Natural killer cell (primary cell): ENCODE measurements at regions of chr5 and their contacts with region 1.

Region 1: GRCh38 chr5:134101686-134102439 is 12.6 kb upstream of the TCF7 start:
- DNase-seq: peak; percentile 81 to 84
- ATAC-seq: peak; percentile 55 to 71 (median 60)
- H3K4me3 ChIP-seq: no peak overlapping the region
- H3K4me3 Mint-ChIP-seq: no peak overlapping the region
- H3K27ac ChIP-seq: no peak overlapping the region
- H3K27ac Mint-ChIP-seq: peak overlapping the region; percentile 82 to 87
- H3K4me1 ChIP-seq: peaks cover 81% of the 10 kb centered on the region
- H3K4me1 Mint-ChIP-seq: peaks cover 19 to 42% of the 10 kb centered on the region in 2 donors
- H3K27me3 ChIP-seq: no peaks in the 10 kb centered on the region
- H3K27me3 Mint-ChIP-seq: no peaks in the 10 kb centered on the region
- CTCF ChIP-seq: peak; percentile 92

Region 2: GRCh38 chr5:134041570-134042411 is 60.1 kb before region 1 on chr5:
- intact Hi-C with region 1: loop called (anchors 5 kb)
- DNase-seq: peak in 1 of 2 donors; percentile 33
- ATAC-seq: no peak
- H3K4me3 ChIP-seq: no peak overlapping the region
- H3K4me3 Mint-ChIP-seq: no peak overlapping the region
- H3K27ac ChIP-seq: peak overlapping the region; percentile 46
- H3K27ac Mint-ChIP-seq: no peak overlapping the region
- H3K4me1 ChIP-seq: peaks cover 30% of the 10 kb centered on the region
- H3K4me1 Mint-ChIP-seq: peaks cover 0 to 6% of the 10 kb centered on the region in 2 donors
- H3K27me3 ChIP-seq: no peaks in the 10 kb centered on the region
- H3K27me3 Mint-ChIP-seq: no peaks in the 10 kb centered on the region
- CTCF ChIP-seq: no peak

Region 3: DNA sequence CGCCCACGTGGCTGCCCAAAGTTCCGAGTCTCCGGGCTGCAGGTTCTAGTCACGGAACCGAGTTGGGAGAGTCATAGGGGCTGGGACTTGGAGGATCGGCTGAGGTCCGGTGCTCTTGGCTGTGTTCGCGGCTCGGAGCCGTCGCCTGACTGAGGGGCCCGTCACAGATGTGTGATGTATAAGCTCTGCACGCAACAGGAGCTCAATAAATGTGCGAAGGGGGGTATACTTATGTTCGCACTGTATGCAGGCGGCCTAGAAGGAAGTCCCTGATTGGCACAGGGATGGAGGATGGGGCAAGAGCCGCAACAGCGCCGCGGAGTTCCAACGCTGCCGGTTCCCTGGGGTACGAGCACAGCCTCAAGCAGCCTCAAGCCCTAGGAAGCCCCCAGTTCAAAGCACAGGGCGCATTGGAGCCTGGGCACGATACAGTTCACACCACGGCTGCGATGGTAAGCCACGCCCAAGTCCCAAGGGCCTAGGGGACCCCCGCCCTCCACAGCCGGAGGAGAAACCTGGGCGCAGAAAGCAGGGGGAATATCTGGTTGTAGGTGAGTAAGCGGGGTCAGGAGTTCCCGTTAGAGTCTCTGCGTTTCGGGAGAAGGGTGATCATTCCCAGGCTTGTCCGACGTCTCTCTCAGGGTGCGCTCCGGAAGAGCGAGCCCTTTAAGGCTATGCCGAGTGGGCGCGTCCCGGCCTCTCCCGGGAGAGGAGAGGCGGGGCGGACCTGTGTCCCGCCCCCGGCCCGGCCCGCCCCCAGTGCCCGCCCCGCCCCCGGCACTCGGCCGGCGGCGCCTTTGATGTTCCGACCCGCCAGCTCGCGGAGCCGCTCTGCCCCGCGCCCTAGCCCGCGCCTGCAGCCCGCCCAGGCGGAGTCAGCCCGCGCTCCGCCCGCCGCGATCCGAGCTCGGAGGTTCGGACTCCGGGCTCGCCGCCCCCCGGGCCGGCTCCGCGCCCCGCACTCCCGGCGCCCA is 12.3 kb after region 1 on chr5 and contains the start of gene TCF7:
- intact Hi-C with region 1: loop called (anchors 2 kb)
- DNase-seq: peak; percentile 67 to 92
- ATAC-seq: peak; percentile 71 to 88 (median 83)
- H3K4me3 ChIP-seq: peak within 1 kb of the TSS; percentile 85
- H3K4me3 Mint-ChIP-seq: peak within 1 kb of the TSS; percentile 94
- H3K27ac ChIP-seq: peak within 1 kb of the TSS; percentile 76
- H3K27ac Mint-ChIP-seq: peak within 1 kb of the TSS; percentile 87 to 91
- H3K4me1 ChIP-seq: peaks cover 66% of the 10 kb centered on the region
- H3K4me1 Mint-ChIP-seq: peaks cover 31 to 51% of the 10 kb centered on the region in 2 donors
- H3K27me3 ChIP-seq: no peaks in the 10 kb centered on the region
- H3K27me3 Mint-ChIP-seq: peaks cover 0 to 4% of the 10 kb centered on the region in 2 donors
- CTCF ChIP-seq: no peak
- total RNA-seq, gene TCF7: 97.7 to 203 (median 158) TPM

Region 4: DNA sequence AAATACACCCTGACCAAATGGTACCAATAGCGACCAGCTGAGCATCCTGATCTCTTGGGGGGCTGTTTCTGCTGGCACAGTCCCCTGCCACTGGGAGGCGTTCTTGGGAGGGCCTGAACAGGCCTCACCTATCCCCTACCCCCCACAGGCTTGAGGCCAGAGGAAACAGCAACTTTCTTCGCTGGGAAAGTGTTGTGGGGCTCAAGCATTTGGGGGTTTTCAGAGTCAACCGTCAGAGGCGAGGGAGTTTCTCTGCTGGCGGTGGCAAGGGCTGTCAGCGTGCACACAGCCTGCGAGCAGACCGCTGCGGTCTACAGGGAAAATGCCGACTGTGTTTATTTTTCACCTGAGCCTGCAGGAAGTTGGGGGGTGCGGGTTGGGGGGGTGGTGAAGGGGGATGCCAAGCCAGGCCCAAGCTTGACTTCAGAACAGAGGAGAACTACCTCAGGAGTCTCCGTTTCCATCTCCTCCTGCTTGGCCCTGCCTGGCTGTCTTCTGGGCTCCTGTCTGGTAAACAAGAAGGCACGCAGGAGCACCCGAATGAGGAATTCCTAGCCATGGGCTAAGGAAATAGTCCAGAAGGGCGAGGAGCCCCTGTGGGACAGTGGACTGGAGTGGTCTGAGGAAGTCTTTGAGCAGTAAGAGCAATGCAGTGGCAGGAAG is 30.6 kb after region 1 on chr5:
- intact Hi-C with region 1: loop called (anchors 2 kb)
- DNase-seq: peak; percentile 75 to 97
- ATAC-seq: peak; percentile 72 to 90 (median 86)
- H3K4me3 ChIP-seq: no peak overlapping the region
- H3K4me3 Mint-ChIP-seq: peak overlapping the region; percentile 85
- H3K27ac ChIP-seq: peak overlapping the region; percentile 98
- H3K27ac Mint-ChIP-seq: peak overlapping the region; percentile 98
- H3K4me1 ChIP-seq: peaks cover 100% of the 10 kb centered on the region
- H3K4me1 Mint-ChIP-seq: peaks cover 57 to 81% of the 10 kb centered on the region in 2 donors
- H3K27me3 ChIP-seq: no peaks in the 10 kb centered on the region
- H3K27me3 Mint-ChIP-seq: no peaks in the 10 kb centered on the region
- CTCF ChIP-seq: peak; percentile 56

Region 5: DNA sequence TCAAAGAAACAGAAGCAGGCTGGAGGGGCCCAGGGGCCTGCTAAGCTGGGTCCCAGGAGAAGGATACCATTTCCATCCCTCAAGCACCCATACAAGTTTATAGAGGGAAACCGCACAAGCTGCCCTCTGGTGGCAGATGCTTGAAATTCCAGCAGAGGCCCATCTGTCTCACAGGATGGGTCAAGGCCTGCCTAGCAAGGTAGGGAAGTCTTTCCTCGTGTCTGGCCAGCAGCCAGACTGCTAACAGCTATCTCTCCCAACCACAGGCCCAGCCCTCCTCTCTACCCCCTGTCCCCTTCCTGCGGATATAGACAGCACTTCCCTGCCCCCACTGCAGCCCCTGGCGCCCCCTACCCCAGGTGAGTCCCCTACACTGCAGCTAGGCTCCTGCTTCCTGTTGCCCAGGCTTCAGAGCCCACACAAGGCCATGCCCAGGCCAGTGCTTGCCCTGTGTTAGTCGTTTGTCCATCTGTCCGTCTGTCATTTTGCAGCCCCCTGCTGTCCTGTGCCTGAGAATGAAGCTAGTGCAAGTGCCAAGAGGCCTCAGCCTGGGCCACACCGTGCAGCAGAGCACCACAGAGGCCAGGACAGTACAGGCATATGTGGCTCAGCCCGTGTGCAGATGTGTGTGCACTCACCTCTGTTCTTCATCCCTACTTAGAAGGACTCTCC is 38.8 kb after region 1 on chr5:
- intact Hi-C with region 1: loop called (anchors 1 kb)
- DNase-seq: peak; percentile 55 to 81
- ATAC-seq: peak; percentile 61 to 78 (median 68)
- H3K4me3 ChIP-seq: no peak overlapping the region
- H3K4me3 Mint-ChIP-seq: no peak overlapping the region
- H3K27ac ChIP-seq: peak overlapping the region; percentile 68
- H3K27ac Mint-ChIP-seq: peak overlapping the region; percentile 98
- H3K4me1 ChIP-seq: peaks cover 64% of the 10 kb centered on the region
- H3K4me1 Mint-ChIP-seq: peaks cover 25 to 70% of the 10 kb centered on the region in 2 donors
- H3K27me3 ChIP-seq: no peaks in the 10 kb centered on the region
- H3K27me3 Mint-ChIP-seq: no peaks in the 10 kb centered on the region
- CTCF ChIP-seq: peak; percentile 75

Region 6: DNA sequence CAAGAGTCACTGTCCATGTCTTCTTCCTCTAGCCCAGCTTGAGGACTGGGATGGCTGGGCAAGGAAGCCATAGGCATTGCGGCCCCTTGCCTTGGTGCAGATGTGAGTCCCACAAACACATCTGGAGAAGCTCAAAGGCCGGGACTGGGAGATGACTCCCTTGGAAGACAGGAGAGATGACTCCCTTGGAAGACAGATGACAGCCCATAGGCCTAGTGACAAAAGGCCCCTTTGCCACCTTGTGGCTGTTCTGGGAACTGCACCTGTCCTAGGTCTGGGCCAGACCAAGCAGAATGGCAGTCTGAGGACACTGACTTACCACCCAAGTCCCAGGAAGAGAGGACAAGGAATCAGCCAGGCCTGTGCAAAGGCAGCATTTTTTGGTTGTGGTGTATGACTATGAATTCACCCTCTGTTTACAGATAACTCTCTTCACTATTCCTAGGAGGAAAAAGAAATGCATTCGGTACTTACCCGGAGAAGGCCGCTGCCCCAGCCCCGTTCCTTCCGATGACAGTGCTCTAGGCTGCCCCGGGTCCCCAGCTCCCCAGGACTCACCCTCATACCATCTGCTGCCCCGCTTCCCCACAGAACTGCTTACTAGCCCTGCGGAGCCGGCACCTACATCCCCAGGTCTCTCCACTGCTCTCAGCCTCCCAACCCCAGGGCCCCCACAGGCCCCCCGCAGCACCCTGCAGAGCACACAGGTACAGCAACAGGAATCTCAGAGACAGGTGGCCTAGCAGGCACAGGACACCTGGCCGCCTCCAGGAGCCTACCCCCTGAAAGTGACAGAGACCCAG is 44.1 kb after region 1 on chr5:
- intact Hi-C with region 1: loop called (anchors 1 kb)
- DNase-seq: peak; percentile 81 to 90
- ATAC-seq: peak; percentile 76 to 88 (median 80)
- H3K4me3 ChIP-seq: no peak overlapping the region
- H3K4me3 Mint-ChIP-seq: peak overlapping the region; percentile 4
- H3K27ac ChIP-seq: peak overlapping the region; percentile 22
- H3K27ac Mint-ChIP-seq: peak overlapping the region; percentile 79 to 89
- H3K4me1 ChIP-seq: peaks cover 18% of the 10 kb centered on the region
- H3K4me1 Mint-ChIP-seq: peaks cover 25 to 40% of the 10 kb centered on the region in 2 donors
- H3K27me3 ChIP-seq: no peaks in the 10 kb centered on the region
- H3K27me3 Mint-ChIP-seq: no peaks in the 10 kb centered on the region
- CTCF ChIP-seq: peak; percentile 88

Region 7: GRCh38 chr5:134184155-134185135 is 82.6 kb after region 1 on chr5:
- intact Hi-C with region 1: no loop called
- DNase-seq: peak; percentile 70 to 90
- ATAC-seq: peak; percentile 94 to 100 (median 94)
- H3K4me3 ChIP-seq: no peak overlapping the region
- H3K4me3 Mint-ChIP-seq: no peak overlapping the region
- H3K27ac ChIP-seq: no peak overlapping the region
- H3K27ac Mint-ChIP-seq: no peak overlapping the region
- H3K4me1 ChIP-seq: no peaks in the 10 kb centered on the region
- H3K4me1 Mint-ChIP-seq: no peaks in the 10 kb centered on the region
- H3K27me3 ChIP-seq: no peaks in the 10 kb centered on the region
- H3K27me3 Mint-ChIP-seq: no peaks in the 10 kb centered on the region
- CTCF ChIP-seq: peak; percentile 95